ENCODE measurements at regions of chr4 and their contacts with region 1.

Region 1: GRCh38 chr4:101356928-101357327 is 9.6 kb upstream of the PPP3CA start:
- DNase-seq: no peak
- ATAC-seq: no peak
- H3K4me3 ChIP-seq: no peak overlapping the region
- H3K4me3 Mint-ChIP-seq: no peak overlapping the region
- H3K27ac ChIP-seq: no peak overlapping the region
- H3K27ac Mint-ChIP-seq: no peak overlapping the region
- H3K4me1 ChIP-seq: no peaks in the 10 kb centered on the region
- H3K4me1 Mint-ChIP-seq: no peaks in the 10 kb centered on the region
- H3K27me3 ChIP-seq: no peaks in the 10 kb centered on the region
- H3K27me3 Mint-ChIP-seq: peaks cover 21% of the 10 kb centered on the region
- CTCF ChIP-seq: no peak

Region 2: GRCh38 chr4:101020956-101021355 is 336.0 kb before region 1 on chr4:
- CTCF ChIA-PET with region 1: no interaction called
- POLR2A ChIA-PET with region 1: no interaction called
- intact Hi-C with region 1: no loop called
- DNase-seq: peak in 2 of 9 experiments; percentile 59 to 73
- ATAC-seq: peak; percentile 72
- H3K4me3 ChIP-seq: no peak overlapping the region
- H3K4me3 Mint-ChIP-seq: peak overlapping the region; percentile 47
- H3K27ac ChIP-seq: peak overlapping the region; percentile 15 to 56
- H3K27ac Mint-ChIP-seq: peak overlapping the region; percentile 90
- H3K4me1 ChIP-seq: peaks cover 29% of the 10 kb centered on the region
- H3K4me1 Mint-ChIP-seq: peaks cover 35% of the 10 kb centered on the region
- H3K27me3 ChIP-seq: no peaks in the 10 kb centered on the region
- H3K27me3 Mint-ChIP-seq: no peaks in the 10 kb centered on the region
- CTCF ChIP-seq: no peak

Region 3: DNA sequence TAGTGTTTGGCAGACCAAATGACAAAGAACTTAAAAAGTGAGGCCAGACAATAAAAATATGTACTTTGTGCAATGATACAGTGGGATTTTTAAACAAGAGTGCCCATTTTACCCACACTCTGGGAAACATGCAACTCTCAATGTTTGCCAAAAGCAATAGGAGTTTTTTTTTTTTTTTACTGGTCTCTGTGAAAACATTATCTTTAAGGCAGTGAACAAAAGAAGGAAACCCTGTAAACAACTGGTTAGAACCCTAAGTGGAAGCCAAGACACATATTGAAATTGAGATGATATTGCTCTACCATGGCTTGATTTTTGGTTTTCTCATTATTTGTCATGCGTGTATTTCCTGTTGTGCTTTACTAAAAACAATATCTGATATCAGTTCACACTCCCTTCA is 57.6 kb after region 1 on chr4:
- CTCF ChIA-PET with region 1: no interaction called
- POLR2A ChIA-PET with region 1: no interaction called
- intact Hi-C with region 1: loop called in 1 of 2 experiments (anchors 5 kb)
- DNase-seq: no peak
- ATAC-seq: no peak
- H3K4me3 ChIP-seq: no peak overlapping the region
- H3K4me3 Mint-ChIP-seq: no peak overlapping the region
- H3K27ac ChIP-seq: no peak overlapping the region
- H3K27ac Mint-ChIP-seq: no peak overlapping the region
- H3K4me1 ChIP-seq: peaks cover 32% of the 10 kb centered on the region
- H3K4me1 Mint-ChIP-seq: peaks cover 34% of the 10 kb centered on the region
- H3K27me3 ChIP-seq: peaks cover 2 to 4% of the 10 kb centered on the region in 2 experiments
- H3K27me3 Mint-ChIP-seq: peaks cover 37% of the 10 kb centered on the region
- CTCF ChIP-seq: no peak

Measured in CD8-positive, alpha-beta T cell (primary cell).